HepG2 (cell line): ENCODE measurements at regions of chr7 and their contacts with region 1.

Region 1: DNA sequence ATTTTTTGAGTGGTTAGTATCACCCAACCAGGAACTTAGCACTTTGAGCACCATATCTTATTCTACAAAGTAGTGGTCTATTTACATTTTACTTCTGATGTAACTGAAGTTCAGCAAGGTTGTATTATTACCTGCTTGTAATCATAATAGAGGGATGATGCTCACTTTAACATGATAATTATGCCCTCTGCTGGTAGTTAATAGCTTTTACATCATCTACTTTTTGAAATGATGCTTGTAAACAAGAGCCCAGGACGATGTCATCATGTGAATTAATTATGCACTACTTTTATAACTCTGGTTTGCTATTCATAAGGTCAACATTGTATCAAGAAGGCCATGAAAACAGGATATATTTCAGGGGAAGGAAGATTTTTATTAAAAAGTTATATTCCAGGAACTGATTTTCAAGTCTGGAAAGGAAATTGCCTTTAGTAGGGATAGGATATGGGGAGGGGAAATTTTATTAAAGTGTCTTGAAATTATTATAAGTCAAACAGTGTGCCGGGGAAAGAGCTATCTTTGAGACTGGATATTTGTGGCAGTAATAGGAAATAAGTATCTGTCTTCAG is 80.3 kb upstream of the SCIN start:
- DNase-seq: peak; percentile 5
- ATAC-seq: peak; percentile 53
- H3K4me3 ChIP-seq: no peak overlapping the region
- H3K27ac ChIP-seq: no peak overlapping the region
- H3K4me1 ChIP-seq: no peaks in the 10 kb centered on the region
- H3K27me3 ChIP-seq: no peaks in the 10 kb centered on the region
- CTCF ChIP-seq: peak; percentile 47; the same call in 1 of the 2 replicates
- EP300 ChIP-seq: no peak
- POLR2A ChIP-seq: no peak
- RAD21 ChIP-seq: no peak

Region 2: DNA sequence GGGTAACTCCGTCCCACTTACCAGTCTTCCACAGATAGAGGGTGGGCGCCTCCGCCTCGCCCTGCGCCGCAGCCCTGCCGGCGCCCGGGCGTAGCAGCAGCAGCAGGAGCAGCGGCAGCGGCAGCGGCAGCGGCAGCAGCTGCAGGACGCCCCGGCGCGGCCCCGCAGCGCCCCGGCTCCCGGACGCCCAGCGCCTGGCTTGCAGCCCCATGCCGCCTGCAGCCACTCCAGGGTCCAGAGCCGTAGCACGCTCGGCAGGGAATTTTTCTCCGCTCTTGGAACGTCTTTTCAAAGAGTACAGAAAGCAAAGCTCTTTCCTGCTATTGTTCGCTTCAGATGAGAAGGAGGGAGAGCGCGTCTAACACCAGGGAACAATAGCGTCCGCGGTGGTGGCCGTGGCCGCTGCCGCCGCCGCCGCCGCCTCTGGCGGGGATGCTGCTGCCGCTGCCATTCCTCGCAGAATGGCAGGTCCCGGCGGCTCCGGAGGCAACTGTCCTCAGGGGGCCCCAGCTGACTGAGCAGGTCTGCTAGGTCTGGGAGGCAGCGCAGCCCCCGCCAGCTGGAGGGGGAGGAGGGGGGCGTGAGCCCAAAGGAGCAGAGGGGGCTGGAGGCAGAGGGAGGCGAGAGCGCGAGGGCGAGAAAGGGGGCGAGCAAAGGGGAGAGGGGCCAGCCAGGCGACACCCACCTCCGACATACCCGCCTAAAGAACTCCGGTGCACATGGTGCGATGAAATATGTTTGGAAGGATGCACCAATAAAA is 658.3 kb before region 1 on chr7 and contains the start of gene THSD7A:
- CTCF ChIA-PET with region 1: no interaction called
- POLR2A ChIA-PET with region 1: no interaction called
- in situ Hi-C with region 1: loop called (anchors 25 kb)
- intact Hi-C with region 1: loop called (anchors 10 kb)
- DNase-seq: peak; percentile 7
- ATAC-seq: peak; percentile 100
- H3K4me3 ChIP-seq: peak within 1 kb of the TSS; percentile 6 to 62 (median 26); a peak in 5 of 6 replicates
- H3K27ac ChIP-seq: no peak within 1 kb of the TSS
- H3K4me1 ChIP-seq: 0 out of 2 replicates have a peak, but pooled peaks cover 6% of the 10 kb centered on the region
- H3K27me3 ChIP-seq: peaks cover 0 to 13% of the 10 kb centered on the region in 2 experiments; a peak in 2 of 5 replicates
- CTCF ChIP-seq: no peak
- EP300 ChIP-seq: no peak
- POLR2A ChIP-seq: no peak
- RAD21 ChIP-seq: no peak; the same call in 1 of the 2 replicates
- total RNA-seq, gene THSD7A: 0.07 TPM in 1 of 2 replicates, not detected in the other

Region 3: GRCh38 chr7:12458520-12459131 is 31.6 kb before region 1 on chr7:
- CTCF ChIA-PET with region 1: interaction called, 13 read pairs
- POLR2A ChIA-PET with region 1: no interaction called
- in situ Hi-C with region 1: no loop called
- intact Hi-C with region 1: loop called (anchors 1 kb)
- DNase-seq: peak; percentile 28
- ATAC-seq: peak; percentile 95
- H3K4me3 ChIP-seq: no peak overlapping the region
- H3K27ac ChIP-seq: no peak overlapping the region
- H3K4me1 ChIP-seq: no peaks in the 10 kb centered on the region
- H3K27me3 ChIP-seq: no peaks in the 10 kb centered on the region
- CTCF ChIP-seq: peak; percentile 70
- EP300 ChIP-seq: no peak
- POLR2A ChIP-seq: no peak
- RAD21 ChIP-seq: 0 out of 2 replicates have a peak, but pooled peaks have one; percentile 21